ENCODE measurements at regions of chr10 and their contacts with region 1.

Region 1: DNA sequence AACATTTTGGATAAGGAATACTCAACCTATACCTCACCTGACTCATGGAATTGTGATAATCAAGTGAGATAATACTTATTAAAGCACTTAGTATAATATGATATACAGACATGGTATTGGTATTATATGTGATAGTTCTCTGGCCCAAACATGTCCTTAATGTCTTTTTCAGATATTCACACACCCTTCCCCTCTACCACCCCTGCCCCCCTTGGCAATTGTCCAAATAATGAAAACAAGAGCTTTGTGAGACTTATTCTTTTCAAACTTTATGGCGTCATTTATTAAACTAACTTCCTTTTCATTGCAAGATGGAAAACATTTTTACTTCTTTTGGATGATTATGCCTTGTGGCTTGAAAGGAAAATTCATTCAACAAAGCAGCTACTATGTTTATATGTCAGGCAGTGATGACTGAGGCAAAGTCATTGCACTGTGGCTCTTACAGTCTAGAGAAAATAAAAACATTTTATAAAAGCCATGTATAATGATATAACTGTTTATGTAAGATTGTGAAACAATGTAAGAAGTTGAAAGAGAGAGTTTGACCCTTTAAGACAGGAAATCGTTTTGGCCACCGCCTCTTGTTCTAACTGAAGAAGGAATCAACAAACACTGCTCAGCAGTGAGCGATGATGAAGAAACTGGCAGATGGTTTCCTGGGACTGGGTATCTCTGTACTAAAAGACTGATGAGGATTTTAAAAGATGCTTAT is 27.4 kb downstream of the MINPP1 start:
- DNase-seq: no peak
- ATAC-seq: no peak
- H3K4me3 ChIP-seq: no peak overlapping the region
- H3K27ac ChIP-seq: no peak overlapping the region
- H3K4me1 ChIP-seq: no peaks in the 10 kb centered on the region
- H3K27me3 ChIP-seq: no peaks in the 10 kb centered on the region
- CTCF ChIP-seq: no peak
- POLR2A ChIP-seq: no peak
- RAD21 ChIP-seq: no peak

Region 2: DNA sequence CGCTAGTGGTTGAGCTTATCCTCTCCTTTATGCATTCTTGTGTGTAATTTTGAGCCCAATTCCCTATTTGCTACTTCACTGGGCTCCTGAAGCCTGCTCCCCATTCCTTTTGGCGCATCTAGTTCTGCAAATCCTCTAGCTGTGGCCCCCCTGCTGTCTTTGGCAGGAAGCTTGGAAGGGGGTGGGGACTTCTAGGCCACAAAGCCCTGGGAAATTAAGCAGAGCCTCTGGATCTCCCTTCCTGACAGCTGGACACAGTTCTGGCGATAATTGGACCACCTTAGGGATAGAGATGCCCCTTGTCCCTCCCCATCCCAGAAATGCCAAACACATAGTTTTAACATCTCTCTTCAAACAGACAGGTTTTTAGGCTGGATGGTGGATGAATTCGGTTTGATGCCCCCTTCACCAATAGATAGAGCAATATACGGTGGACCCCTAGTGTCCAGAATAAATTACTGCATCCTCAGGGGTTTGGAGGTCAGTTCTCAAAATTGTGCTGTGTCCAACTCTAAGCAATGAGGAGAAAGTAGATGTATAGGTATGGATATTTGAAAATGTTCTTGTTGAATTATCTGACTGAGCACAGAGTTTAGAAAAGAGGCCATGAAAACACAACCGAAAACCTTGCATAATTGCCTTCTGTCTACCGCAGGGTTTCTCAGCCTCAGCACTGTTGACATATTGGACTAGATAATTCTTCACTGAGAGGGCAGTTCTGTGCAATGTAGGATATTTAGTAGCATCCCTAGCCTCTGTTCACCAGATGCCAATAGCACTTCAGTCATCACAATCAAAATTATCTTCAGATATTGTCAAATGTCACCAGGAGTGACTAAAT is 203.1 kb after region 1 on chr10:
- CTCF ChIA-PET with region 1: interaction called, 15 read pairs
- POLR2A ChIA-PET with region 1: no interaction called
- RAD21 ChIA-PET with region 1: interaction called in 1 of 2 experiments, 6 read pairs
- intact Hi-C with region 1: loop called (anchors 2 kb)
- DNase-seq: peak; percentile 29
- ATAC-seq: peak; percentile 97
- H3K4me3 ChIP-seq: no peak overlapping the region
- H3K27ac ChIP-seq: no peak overlapping the region
- H3K4me1 ChIP-seq: peaks cover 6% of the 10 kb centered on the region in 2 experiments
- H3K27me3 ChIP-seq: no peaks in the 10 kb centered on the region
- CTCF ChIP-seq: peak; percentile 70 to 88 (median 83); a peak in 5 of 6 replicates
- POLR2A ChIP-seq: no peak
- RAD21 ChIP-seq: peak; percentile 91

Region 3: DNA sequence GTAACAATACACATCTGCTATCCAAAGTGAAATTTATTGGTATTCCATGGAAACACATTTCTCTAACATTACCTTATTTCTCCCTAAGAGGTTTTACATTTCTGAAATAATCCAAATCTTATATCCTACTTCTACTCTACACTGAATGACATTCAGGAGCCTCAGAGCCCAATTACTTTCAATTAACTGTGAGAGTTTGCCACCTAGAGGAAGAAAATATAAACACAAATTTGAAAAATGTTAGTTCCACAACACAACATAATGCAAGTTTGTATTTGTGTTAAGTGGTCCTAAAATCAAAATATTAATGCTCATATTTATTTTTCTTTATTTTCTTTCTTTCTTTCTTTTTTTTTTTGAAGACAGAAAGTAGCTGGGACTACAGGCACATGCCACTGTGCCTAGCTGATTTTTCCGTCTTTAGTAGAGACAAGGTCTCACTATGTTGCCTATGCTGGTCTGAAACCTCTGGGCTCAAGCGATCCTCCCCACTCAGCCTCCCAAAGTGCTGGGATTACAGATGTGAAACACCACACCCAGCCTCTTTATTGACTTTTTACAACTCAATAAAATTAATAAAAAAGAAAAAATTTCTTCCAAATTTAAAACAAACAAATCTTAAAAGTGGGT is 239.9 kb after region 1 on chr10:
- CTCF ChIA-PET with region 1: no interaction called
- POLR2A ChIA-PET with region 1: no interaction called
- RAD21 ChIA-PET with region 1: no interaction called
- intact Hi-C with region 1: loop called (anchors 10 kb)
- DNase-seq: no peak
- ATAC-seq: peak; percentile 60
- H3K4me3 ChIP-seq: no peak overlapping the region
- H3K27ac ChIP-seq: no peak overlapping the region
- H3K4me1 ChIP-seq: peaks cover 16 to 30% of the 10 kb centered on the region in 2 experiments
- H3K27me3 ChIP-seq: no peaks in the 10 kb centered on the region
- CTCF ChIP-seq: peak; percentile 31 to 57 (median 40); a peak in 4 of 6 replicates
- POLR2A ChIP-seq: no peak
- RAD21 ChIP-seq: peak; percentile 64